ENCODE measurements at regions of chr6 and their contacts with region 1.

Region 1: GRCh38 chr6:52995913-52996645 is 995 bp upstream of the GSTA4 start:
- DNase-seq: no peak
- H3K4me3 ChIP-seq: peak overlapping the region; percentile 12; the same call in 1 of the 2 replicates
- H3K27me3 ChIP-seq: no peaks in the 10 kb centered on the region
- CTCF ChIP-seq: no peak

Region 2: DNA sequence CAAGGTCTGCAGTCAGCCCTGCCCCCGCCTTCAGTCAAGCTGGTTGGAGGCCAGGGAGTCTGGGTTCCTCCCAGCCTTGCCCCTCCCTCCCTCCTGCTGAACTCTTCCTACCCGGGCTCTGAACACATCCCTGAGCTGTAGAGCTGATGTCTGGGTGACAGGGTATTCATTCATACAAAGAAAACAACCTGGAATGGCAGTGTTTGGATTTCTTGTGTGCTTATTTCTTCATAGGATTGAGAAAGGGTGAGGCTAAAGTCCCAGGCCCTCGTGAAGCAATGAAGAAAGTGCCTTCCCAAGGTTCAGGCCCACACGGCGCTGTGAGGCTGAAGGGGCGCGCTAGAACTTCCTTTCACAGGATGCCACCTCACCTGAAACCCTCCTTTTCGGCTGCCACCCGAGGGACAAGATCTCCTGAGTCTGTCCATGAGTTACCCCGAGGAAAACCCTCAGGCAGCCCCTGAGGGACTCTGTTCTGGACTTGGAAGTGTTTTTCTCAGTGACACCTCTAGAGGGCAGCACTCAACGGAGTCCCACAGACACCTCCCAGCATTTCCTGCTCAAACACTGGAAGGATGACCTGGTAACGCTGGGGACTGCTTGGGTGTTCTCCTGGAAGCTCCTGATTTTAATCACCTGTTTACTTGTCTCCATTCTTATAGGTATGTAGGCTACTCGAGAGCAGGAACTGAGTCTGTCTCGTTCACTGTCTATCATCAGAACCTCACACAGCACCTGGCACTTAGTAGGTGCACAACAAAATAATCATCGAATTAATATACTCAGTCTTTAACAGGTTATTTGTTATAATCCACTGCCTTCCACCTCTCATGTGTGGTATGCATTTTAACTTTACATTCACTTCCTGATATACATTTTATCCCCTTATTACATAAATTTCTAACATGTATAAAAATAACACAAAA is 180.6 kb before region 1 on chr6:
- CTCF ChIA-PET with region 1: interaction called, 11 read pairs
- POLR2A ChIA-PET with region 1: no interaction called
- DNase-seq: no peak
- H3K4me3 ChIP-seq: no peak overlapping the region
- H3K27me3 ChIP-seq: no peaks in the 10 kb centered on the region
- CTCF ChIP-seq: peak; percentile 77

Region 3: DNA sequence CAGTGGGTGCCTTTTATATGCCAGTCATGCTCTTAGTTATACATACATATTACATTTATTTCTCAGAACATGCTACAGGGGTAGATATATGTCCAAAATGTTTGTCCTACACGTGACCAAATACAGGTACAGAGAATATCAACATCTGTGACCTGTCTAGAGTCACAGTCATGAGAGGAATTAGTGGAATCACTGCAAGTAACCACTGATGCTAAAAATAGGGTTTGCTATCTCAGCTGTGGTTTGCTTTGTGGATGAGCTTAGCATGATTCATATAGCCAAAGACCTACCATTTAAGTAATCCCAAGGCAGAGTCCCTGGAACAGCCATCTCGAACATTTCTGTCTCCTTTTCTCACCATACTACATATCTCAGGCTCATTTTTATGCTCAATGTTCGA is 118.9 kb before region 1 on chr6:
- CTCF ChIA-PET with region 1: interaction called, 12 read pairs
- POLR2A ChIA-PET with region 1: no interaction called
- DNase-seq: peak; percentile 72
- H3K4me3 ChIP-seq: no peak overlapping the region
- H3K27me3 ChIP-seq: peaks cover 3% of the 10 kb centered on the region
- CTCF ChIP-seq: no peak

Region 4: GRCh38 chr6:53029257-53029656 is 33.2 kb after region 1 on chr6:
- CTCF ChIA-PET with region 1: interaction called, 12 read pairs
- POLR2A ChIA-PET with region 1: interaction called, 3 read pairs
- DNase-seq: no peak
- H3K4me3 ChIP-seq: no peak overlapping the region
- H3K27me3 ChIP-seq: no peaks in the 10 kb centered on the region
- CTCF ChIP-seq: no peak

Region 5: GRCh38 chr6:53048431-53049195 is 52.5 kb after region 1 on chr6:
- CTCF ChIA-PET with region 1: interaction called, 10 read pairs
- POLR2A ChIA-PET with region 1: no interaction called
- DNase-seq: no peak
- H3K4me3 ChIP-seq: no peak overlapping the region
- H3K27me3 ChIP-seq: no peaks in the 10 kb centered on the region
- CTCF ChIP-seq: no peak

Region 6: DNA sequence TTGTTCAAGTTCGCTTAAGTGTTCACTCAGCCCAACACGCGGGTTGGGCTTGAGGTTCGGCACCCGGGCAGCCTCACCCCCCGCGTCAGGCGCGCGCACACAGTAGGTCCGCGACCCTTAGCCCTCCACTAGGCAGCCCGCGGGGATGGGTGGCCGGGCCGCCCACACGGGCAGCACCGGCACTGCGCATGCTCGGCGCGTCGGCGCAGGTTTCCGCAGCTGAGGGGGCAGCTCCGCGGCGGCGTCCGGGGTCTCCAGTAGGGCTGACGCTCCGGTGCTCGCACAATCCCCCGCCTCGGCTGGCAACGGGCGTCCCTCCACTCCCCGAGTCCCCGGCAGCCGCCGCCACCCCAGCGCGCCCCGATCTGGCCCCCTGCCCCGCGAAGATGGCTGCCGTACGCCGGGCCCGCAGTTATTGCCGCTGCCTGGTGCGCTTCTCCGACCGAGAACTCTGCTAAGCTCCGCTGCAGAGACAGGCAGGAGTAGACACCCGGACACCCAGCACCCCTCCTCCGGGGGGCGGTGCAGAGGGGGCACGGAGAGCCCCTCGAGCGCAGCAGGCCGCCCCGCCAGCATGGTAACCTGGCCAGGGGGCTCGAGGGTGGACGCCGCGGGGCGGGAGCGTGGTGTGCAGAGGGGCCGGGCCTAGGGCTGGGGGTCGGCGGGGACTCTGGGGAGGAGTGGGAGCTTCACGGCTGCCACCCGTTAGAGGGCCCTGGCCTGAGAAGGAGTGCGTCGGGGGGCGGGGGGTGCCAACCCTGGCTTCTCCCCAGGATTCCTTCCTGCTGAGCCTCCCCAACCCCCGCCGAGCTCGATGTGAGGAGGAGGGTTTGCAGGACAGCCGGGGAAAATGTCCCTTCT is 69.4 kb after region 1 on chr6 and contains the start of gene FBXO9:
- CTCF ChIA-PET with region 1: interaction called, 12 read pairs
- POLR2A ChIA-PET with region 1: interaction called, 4 read pairs
- DNase-seq: no peak
- H3K4me3 ChIP-seq: peak within 1 kb of the TSS; percentile 68
- H3K27me3 ChIP-seq: no peaks in the 10 kb centered on the region
- CTCF ChIP-seq: no peak
- polyA plus RNA-seq, gene FBXO9: 78.9 and 83.5 TPM in 2 replicates

Region 7: DNA sequence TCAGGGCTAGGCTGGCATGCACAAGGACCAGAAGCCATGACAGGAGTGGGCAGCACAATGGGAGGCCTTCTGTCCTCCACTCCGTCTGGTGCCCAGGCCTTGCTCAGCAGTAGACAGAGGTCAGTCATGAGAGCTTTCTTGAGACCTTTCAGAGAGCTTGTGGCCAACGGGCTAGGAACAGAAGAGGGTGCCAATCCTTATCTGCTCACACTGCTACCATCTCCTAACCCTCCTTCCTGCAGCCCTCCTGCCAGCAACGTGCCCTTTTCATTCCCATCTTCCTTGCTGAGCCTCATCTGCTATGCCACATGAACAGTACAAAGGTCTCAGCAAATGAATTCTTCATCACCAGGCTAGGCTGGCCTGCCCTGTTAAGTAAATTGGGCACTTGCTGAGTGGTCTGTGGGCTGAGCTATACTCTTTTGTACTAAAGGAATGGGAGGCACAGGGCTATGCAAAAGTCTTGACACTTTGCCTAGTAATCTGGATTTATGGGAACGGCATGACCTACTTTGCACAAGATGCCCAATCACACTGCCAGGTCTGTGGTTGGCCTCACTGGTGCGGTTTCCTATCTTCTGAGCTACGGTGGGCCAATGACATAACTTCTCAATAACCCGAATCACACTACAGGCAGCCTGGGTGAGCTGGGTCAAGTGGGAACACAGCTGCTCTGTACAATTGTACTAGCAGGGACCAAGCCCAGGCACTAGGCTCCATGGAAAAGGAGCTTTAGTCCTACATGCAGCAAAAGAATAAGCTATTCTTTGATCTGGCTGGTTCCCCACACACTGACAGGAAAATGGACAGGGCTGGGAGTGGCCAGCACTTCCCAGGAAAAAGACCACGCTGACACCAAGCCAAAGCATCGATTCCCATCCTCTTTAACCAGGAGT is 304.8 kb after region 1 on chr6:
- CTCF ChIA-PET with region 1: no interaction called
- POLR2A ChIA-PET with region 1: no interaction called
- DNase-seq: no peak
- H3K4me3 ChIP-seq: no peak overlapping the region
- H3K27me3 ChIP-seq: no peaks in the 10 kb centered on the region
- CTCF ChIP-seq: no peak